CD4-positive, alpha-beta T cell (primary cell): ENCODE measurements at regions of chrX and their contacts with region 1.

Region 1: DNA sequence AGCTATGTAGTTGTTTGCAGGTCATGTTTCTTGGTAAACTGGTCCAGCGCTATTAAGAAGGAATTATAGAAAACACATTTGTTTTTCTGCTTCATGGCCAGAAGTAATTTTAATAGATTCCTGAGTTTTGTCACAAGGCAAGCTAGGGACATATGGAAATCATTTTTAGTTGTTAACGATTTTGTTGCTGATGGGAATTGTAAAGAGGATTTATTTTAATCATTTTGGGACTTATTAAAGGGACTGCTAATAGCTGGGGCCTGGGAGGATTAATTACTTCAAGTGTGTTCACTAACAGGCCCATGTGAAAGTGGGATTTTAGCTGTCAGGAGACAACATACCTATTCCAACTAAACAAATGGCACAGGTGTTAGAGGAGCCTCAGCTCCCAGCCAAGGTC is 492.0 kb upstream of the ARX start:
- DNase-seq: no peak
- ATAC-seq: no peak
- H3K4me3 ChIP-seq: no peak overlapping the region
- H3K4me3 Mint-ChIP-seq: no peak overlapping the region
- H3K27ac ChIP-seq: no peak overlapping the region
- H3K27ac Mint-ChIP-seq: no peak overlapping the region
- H3K4me1 ChIP-seq: no peaks in the 10 kb centered on the region
- H3K4me1 Mint-ChIP-seq: no peaks in the 10 kb centered on the region
- H3K27me3 ChIP-seq: no peaks in the 10 kb centered on the region
- H3K27me3 Mint-ChIP-seq: no peaks in the 10 kb centered on the region
- CTCF ChIP-seq: no peak

Region 2: DNA sequence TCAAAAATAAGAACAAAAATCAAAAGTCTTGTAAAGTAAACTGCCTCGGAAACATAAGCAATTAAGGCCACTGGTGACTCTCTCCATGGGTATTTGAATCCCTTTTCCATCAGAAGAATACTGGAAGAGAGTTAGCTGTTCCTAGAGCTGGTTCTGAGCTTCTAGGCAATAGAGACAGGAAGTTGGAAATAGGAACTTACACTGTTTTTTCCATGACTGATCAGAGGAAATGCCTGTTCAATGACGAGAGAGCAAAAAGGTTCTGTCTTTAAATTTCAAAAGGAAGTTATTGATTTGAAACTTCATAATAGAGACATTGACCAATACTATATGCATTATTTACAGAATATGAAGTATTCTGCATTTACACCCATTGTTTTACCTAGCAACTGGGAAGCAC is 11.5 kb after region 1 on chrX:
- CTCF ChIA-PET with region 1: no interaction called
- POLR2A ChIA-PET with region 1: no interaction called
- intact Hi-C with region 1: loop called in 1 of 2 experiments (anchors 1 kb)
- DNase-seq: no peak
- ATAC-seq: no peak
- H3K4me3 ChIP-seq: no peak overlapping the region
- H3K4me3 Mint-ChIP-seq: no peak overlapping the region
- H3K27ac ChIP-seq: no peak overlapping the region
- H3K27ac Mint-ChIP-seq: no peak overlapping the region
- H3K4me1 ChIP-seq: no peaks in the 10 kb centered on the region
- H3K4me1 Mint-ChIP-seq: no peaks in the 10 kb centered on the region
- H3K27me3 ChIP-seq: no peaks in the 10 kb centered on the region
- H3K27me3 Mint-ChIP-seq: no peaks in the 10 kb centered on the region
- CTCF ChIP-seq: no peak